CD8-positive, alpha-beta T cell (primary cell): ENCODE measurements at regions of chr17 and their contacts with region 1.

Region 1: DNA sequence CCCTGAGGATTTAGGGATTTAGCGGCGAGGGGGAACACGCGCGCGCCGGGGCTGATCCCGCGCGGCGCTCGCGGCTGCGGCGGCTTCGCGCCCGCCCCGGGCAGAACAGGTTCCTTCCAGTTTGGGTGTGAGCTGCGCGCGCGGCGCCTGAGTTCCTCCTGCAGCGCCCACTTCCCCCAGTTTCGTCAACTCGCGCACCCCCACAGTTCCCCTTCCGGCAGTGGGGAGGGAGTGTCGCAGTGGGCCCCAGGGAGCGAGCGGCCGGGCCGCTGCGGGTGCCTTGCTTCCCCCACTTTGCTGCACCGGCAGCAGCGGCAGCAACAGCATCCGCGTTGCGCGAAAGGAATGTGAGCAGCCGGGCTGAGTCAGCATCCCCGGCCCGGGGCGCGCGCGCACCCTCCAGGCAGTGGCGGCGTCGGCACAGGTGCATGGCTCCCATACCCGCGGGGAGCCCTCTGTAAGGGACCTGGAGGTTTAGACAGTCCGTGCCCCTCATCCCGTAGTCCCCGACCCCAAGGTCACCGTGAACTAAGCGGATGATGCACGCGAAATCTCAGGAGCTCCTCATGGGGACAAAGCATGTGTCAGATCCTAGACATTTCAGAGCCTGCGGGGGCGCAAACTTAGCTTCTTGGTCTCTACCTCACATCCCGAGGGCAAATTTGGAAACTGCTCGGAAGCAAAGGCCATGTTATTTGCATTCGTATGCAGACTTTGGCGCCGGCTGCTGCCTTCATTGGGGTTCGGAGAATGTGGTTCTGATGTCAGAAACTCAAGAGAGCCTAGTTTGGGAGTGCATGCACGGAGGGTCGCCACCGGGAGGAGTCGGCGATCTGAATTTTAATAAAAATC is 775 bp downstream of the ARSG start:
- DNase-seq: peak; percentile 88 to 99 (median 95)
- ATAC-seq: peak; percentile 70
- H3K4me3 ChIP-seq: peak overlapping the region; percentile 56 to 89
- H3K4me3 Mint-ChIP-seq: peak overlapping the region; percentile 82
- H3K27ac ChIP-seq: peak overlapping the region; percentile 66 to 97
- H3K27ac Mint-ChIP-seq: peak overlapping the region; percentile 91
- H3K4me1 ChIP-seq: peaks cover 60% of the 10 kb centered on the region
- H3K4me1 Mint-ChIP-seq: peaks cover 60% of the 10 kb centered on the region
- H3K27me3 ChIP-seq: no peaks in the 10 kb centered on the region
- H3K27me3 Mint-ChIP-seq: no peaks in the 10 kb centered on the region
- CTCF ChIP-seq: no peak

Region 2: DNA sequence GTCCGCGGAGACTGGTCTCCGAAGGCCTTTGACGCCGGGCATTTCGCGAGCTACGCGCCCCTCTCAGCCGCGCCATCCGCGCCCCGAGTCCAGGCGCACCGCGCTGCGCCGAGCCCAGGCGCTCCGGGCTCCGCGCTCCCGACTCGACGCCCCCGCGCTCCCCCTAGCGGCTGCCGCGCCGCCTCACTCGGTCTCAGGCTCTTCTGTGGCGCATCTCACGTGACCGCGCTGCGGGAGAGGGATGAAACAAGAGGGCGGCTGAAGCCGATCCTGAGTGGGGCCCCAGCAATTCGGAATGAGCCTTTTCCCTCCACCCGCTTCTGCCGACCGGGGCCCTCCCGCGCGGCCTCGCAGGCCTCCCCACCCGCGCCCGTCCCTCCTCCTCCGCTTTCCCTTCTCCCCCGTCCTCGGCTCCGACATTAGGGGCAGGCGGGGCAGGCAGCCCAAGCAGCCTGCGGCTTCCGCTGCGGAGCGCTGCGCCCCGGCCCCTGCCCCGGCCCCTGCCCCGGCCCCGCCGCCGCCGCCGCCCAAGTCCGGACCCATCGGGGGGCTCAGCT is 86.7 kb before region 1 on chr17:
- CTCF ChIA-PET with region 1: interaction called, 3 read pairs
- POLR2A ChIA-PET with region 1: interaction called, 17 read pairs
- intact Hi-C with region 1: loop called in 1 of 2 experiments (anchors 1 kb)
- DNase-seq: peak; percentile 87 to 96 (median 93)
- ATAC-seq: peak; percentile 70
- H3K4me3 ChIP-seq: peak overlapping the region; percentile 68 to 78
- H3K4me3 Mint-ChIP-seq: peak overlapping the region; percentile 88
- H3K27ac ChIP-seq: peak overlapping the region; percentile 77 to 78
- H3K27ac Mint-ChIP-seq: peak overlapping the region; percentile 93
- H3K4me1 ChIP-seq: peaks cover 23% of the 10 kb centered on the region
- H3K4me1 Mint-ChIP-seq: peaks cover 37% of the 10 kb centered on the region
- H3K27me3 ChIP-seq: no peaks in the 10 kb centered on the region
- H3K27me3 Mint-ChIP-seq: no peaks in the 10 kb centered on the region
- CTCF ChIP-seq: peak; percentile 89

Region 3: DNA sequence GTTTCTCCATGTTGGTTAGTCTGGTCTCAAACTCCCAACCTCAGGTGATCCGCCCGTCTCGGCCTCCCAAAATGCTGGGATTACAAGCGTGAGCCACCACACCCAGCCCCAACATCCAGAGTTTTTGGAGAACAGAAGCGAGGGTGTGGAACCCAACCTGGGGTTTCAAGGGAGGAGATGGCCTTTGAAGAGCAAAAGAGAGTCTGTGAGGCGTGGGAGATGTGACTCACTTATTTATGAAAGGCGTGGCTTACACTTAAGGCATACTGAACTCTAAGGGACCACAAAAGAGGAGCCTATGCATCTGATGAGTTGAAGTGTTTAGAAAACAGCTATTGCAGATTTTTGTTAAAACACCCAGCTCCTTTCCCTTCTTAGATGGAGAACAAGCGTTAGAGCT is 18.1 kb after region 1 on chr17:
- CTCF ChIA-PET with region 1: interaction called, 4 read pairs
- POLR2A ChIA-PET with region 1: interaction called, 18 read pairs
- intact Hi-C with region 1: loop called in 1 of 2 experiments (anchors 1 kb)
- DNase-seq: peak in 7 of 9 experiments; percentile 32 to 58 (median 48)
- ATAC-seq: peak; percentile 95
- H3K4me3 ChIP-seq: no peak overlapping the region
- H3K4me3 Mint-ChIP-seq: no peak overlapping the region
- H3K27ac ChIP-seq: no peak overlapping the region
- H3K27ac Mint-ChIP-seq: peak overlapping the region; percentile 18
- H3K4me1 ChIP-seq: peaks cover 26% of the 10 kb centered on the region
- H3K4me1 Mint-ChIP-seq: peaks cover 58% of the 10 kb centered on the region
- H3K27me3 ChIP-seq: no peaks in the 10 kb centered on the region
- H3K27me3 Mint-ChIP-seq: no peaks in the 10 kb centered on the region
- CTCF ChIP-seq: no peak

Region 4: DNA sequence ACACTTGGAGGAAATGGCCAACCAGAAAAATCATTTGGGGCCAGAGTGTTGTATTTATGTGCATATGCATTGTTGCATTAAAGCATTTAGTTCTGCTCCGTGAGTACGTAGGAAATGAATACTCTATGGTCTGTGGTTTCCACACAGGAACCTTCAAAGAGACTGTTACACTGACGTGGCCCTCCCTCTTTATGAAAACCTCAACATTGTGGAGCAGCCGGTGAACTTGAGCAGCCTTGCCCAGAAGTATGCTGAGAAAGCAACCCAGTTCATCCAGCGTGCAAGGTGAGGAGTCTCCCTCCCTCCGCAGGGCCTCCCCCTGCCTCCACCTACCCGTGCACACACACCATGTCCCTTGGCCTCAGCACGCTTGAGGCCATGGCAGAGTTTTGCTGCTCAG is 64.5 kb after region 1 on chr17:
- CTCF ChIA-PET with region 1: interaction called, 4 read pairs
- POLR2A ChIA-PET with region 1: interaction called, 28 read pairs
- intact Hi-C with region 1: loop called (anchors 1 kb)
- DNase-seq: peak; percentile 44 to 93 (median 69)
- ATAC-seq: peak; percentile 91
- H3K4me3 ChIP-seq: peak overlapping the region; percentile 7 to 12
- H3K4me3 Mint-ChIP-seq: peak overlapping the region; percentile 72
- H3K27ac ChIP-seq: peak overlapping the region; percentile 14 to 45
- H3K27ac Mint-ChIP-seq: peak overlapping the region; percentile 83
- H3K4me1 ChIP-seq: peaks cover 51% of the 10 kb centered on the region
- H3K4me1 Mint-ChIP-seq: peaks cover 57% of the 10 kb centered on the region
- H3K27me3 ChIP-seq: no peaks in the 10 kb centered on the region
- H3K27me3 Mint-ChIP-seq: no peaks in the 10 kb centered on the region
- CTCF ChIP-seq: no peak

Region 5: DNA sequence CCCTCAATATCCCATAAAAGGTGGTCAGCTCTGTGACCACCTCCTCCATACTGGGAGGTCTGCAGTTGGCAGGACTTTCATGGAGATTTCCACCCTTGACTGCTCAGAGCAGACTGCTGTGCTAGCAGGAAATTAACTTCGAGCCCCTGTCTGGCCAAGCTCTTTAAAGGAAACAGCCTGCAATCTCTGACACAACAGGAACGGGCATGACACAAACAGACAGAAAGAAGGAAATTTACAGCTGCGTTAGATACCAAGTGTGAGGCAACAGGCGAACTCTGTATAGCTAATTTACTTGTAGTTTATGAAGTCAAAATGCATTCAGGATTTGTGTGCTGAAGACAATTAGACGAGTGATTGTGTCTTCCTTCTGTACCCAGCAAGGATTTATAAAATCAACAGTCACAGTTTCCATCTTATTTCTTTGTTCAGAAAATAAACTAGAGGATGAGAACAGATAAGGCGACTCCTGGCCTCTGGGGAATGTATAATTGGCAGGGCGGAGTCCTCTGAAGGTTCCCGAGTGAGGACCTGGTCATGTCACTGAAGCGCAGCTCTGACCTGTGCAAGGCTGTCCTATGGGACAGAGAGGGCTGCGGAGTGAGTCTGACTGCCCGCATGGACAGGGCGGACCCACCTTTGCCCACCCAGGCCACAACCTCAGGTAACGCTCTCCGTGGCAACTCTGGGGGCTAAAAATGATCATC is 149.1 kb after region 1 on chr17:
- CTCF ChIA-PET with region 1: interaction called, 10 read pairs
- POLR2A ChIA-PET with region 1: interaction called, 9 read pairs
- intact Hi-C with region 1: loop called in 1 of 2 experiments (anchors 1 kb)
- DNase-seq: no peak
- ATAC-seq: no peak
- H3K4me3 ChIP-seq: no peak overlapping the region
- H3K4me3 Mint-ChIP-seq: no peak overlapping the region
- H3K27ac ChIP-seq: peak overlapping the region in 1 of 2 experiments; percentile 3
- H3K27ac Mint-ChIP-seq: peak overlapping the region; percentile 85
- H3K4me1 ChIP-seq: peaks cover 24% of the 10 kb centered on the region
- H3K4me1 Mint-ChIP-seq: peaks cover 43% of the 10 kb centered on the region
- H3K27me3 ChIP-seq: no peaks in the 10 kb centered on the region
- H3K27me3 Mint-ChIP-seq: no peaks in the 10 kb centered on the region
- CTCF ChIP-seq: no peak

Region 6: GRCh38 chr17:69327060-69327831 is 1035.2 kb after region 1 on chr17 and contains the start of gene ABCA5:
- CTCF ChIA-PET with region 1: no interaction called
- POLR2A ChIA-PET with region 1: no interaction called
- intact Hi-C with region 1: loop called in 1 of 2 experiments (anchors 10 kb)
- DNase-seq: peak; percentile 72 to 98 (median 87)
- ATAC-seq: peak; percentile 96
- H3K4me3 ChIP-seq: peak within 1 kb of the TSS; percentile 79 to 94
- H3K4me3 Mint-ChIP-seq: peak within 1 kb of the TSS; percentile 96
- H3K27ac ChIP-seq: peak within 1 kb of the TSS; percentile 85 to 92
- H3K27ac Mint-ChIP-seq: peak within 1 kb of the TSS; percentile 97
- H3K4me1 ChIP-seq: peaks cover 17% of the 10 kb centered on the region
- H3K4me1 Mint-ChIP-seq: peaks cover 30% of the 10 kb centered on the region
- H3K27me3 ChIP-seq: peaks cover 0 to 3% of the 10 kb centered on the region in 2 experiments
- H3K27me3 Mint-ChIP-seq: peaks cover 7% of the 10 kb centered on the region
- CTCF ChIP-seq: no peak
- total RNA-seq, gene ABCA5: 21.8 to 22.4 TPM